Pancreas (tissue), 10 donors: ENCODE measurements at regions of chr6 and their contacts with region 1.

Region 1: DNA sequence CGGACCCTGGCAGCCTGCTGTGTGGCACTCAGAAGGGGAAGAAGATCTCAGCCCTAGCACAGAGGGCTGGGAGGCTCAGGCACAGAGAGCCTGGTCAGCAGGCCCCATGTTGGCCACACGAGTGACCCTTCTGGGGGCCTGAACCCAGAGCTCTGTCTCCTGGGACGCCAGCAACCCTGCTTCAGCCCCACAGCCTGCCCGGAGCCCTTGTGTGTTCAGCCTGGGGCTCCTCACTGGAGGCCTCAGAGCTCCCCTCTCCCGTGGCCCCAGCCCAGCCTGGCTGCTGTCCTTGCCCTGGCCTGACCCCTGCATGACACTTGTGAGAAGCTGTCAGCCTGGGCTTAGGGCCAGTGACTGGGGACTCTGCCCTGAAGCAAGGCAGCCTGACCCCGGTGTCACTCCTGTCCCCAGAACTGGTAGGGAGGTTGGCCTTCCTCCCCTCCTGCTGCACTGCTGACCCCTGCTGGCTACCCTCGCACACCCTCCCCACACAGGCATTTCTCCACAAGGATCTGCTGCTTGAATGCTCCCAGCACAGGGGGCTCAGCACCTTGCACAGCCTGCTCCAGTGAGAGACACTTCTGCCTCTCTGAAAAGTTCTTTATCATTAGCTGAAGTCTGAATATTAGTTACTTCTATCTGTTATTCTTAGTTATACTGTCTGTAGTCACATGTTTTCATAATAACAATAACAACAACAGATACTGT is 15.4 kb upstream of the IP6K3 start:
- DNase-seq: peak; percentile 67 to 89 (median 82)
- ATAC-seq: peak; percentile 88 to 98 (median 93)
- H3K4me3 ChIP-seq: no peak overlapping the region
- H3K27ac ChIP-seq: no peak overlapping the region
- H3K4me1 ChIP-seq: no peaks in the 10 kb centered on the region
- H3K27me3 ChIP-seq: no peaks in the 10 kb centered on the region
- CTCF ChIP-seq: peak; percentile 9 to 64 (median 56)

Region 2: DNA sequence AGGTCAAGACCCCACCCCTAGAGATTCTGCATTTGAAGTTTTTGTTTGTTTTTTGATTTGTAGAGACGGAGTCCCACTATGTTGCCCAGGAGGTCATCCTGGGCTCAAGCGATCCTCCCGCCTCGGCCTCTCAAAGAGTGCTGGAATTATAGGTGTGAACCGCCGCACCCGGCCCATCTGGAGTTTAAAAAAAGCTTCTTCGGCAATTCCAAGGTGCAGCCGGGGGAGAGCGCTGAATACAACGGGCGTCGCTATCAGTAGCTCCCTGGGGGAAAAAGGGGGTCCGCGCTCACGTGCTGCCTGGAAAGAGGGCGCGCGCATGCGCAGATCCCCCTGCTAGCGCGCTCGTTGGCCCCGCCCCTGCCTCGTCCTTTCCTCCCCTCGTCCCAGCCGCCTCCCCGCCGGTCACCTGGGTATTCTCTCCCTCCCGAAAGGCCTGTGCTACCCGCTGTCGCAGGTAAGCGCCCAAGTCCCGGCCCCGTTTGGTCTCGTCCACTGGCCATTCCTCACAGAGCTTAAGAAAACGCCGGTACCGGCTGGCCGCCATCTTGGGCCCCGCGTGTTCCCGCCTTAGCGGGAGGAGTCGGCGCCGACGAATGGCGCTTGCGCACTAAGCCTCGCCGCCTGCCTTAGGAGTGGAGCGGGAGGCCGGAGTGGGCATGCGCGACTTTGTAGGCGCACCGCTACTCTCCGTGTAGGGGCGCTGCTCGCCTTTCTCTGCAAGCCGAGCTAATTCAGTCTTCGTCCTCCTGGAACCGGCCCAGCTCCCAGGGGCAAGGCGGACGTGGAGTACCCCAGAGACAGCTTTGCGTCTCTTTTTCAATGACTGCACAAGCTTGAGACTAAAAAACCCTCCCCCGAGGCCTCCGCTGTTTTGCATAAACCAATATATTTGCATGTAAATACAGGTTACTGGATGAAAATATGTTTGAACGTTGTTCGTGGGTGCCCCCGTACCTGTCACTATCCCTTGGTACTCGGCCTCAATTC is 50.6 kb before region 1 on chr6 and contains the start of gene UQCC2:
- intact Hi-C with region 1: loop called in 1 of 3 experiments (anchors 5 kb)
- DNase-seq: peak; percentile 96 to 100 (median 98)
- ATAC-seq: peak; percentile 90 to 96 (median 96)
- H3K4me3 ChIP-seq: peak within 1 kb of the TSS; percentile 58 to 90 (median 88)
- H3K27ac ChIP-seq: peak within 1 kb of the TSS; percentile 69 to 90 (median 87)
- H3K4me1 ChIP-seq: peaks cover 12 to 24% (median 14%) of the 10 kb centered on the region in 3 donors
- H3K27me3 ChIP-seq: no peaks in the 10 kb centered on the region
- CTCF ChIP-seq: peak; percentile 6 to 53 (median 50)
- total RNA-seq, gene UQCC2: 13.9 to 32.1 (median 23.3) TPM

Region 3: GRCh38 chr6:33875141-33875581 is 113.1 kb after region 1 on chr6:
- intact Hi-C with region 1: no loop called
- DNase-seq: no peak
- ATAC-seq: no peak
- H3K4me3 ChIP-seq: no peak overlapping the region
- H3K27ac ChIP-seq: no peak overlapping the region
- H3K4me1 ChIP-seq: no peaks in the 10 kb centered on the region
- H3K27me3 ChIP-seq: no peaks in the 10 kb centered on the region
- CTCF ChIP-seq: no peak

Region 4: GRCh38 chr6:33988121-33989015 is 226.3 kb after region 1 on chr6:
- intact Hi-C with region 1: no loop called
- DNase-seq: peak in 1 of 6 donors; percentile 27
- ATAC-seq: peak; percentile 60 to 86 (median 78)
- H3K4me3 ChIP-seq: no peak overlapping the region
- H3K27ac ChIP-seq: peak overlapping the region in 2 of 4 donors; percentile 16 to 58
- H3K4me1 ChIP-seq: no peaks in the 10 kb centered on the region
- H3K27me3 ChIP-seq: no peaks in the 10 kb centered on the region
- CTCF ChIP-seq: no peak